Head of caudate nucleus (tissue), 42 donors: ENCODE measurements at regions of chr16 and their contacts with region 1.

Region 1: DNA sequence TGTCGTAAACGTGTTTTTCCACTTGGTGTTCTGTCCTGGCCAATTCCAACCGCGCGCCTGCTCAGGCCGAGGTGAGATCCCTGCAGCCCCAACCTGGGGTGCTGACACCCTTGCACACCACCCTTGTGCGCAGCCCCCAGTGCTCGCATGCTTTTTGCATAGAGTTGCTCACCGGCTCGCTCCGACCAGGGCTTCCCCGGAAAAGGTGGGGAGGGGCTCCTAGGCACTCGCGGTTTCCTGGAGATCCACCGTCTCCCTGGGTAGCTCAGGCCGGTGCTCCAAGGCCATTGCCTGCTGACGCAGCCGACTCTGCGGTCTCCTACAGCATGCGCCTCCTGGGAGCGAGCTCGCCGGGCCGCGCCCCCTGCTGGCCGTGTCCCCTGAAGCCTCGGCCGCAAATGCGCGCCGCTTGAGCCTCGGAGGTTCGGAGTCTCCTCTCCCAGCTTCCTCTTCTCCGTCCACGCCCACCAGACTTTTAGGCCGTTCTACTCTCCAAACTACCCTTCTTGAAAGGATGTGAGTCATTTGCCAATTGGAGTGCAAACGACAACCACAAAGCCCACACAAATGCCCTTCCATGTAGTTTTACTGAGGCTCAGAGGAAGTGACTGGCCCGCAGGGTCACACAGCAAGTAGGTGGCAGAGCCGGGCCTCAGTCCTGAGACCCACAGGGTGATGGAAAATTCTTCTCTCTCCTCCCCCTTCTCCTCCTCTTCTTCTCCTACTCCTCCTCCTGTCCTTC is 7.2 kb upstream of the PDP2 start:
- DNase-seq: peak; percentile 71 to 96 (median 90)

Region 2: GRCh38 chr16:66406534-66407221 is 466.4 kb before region 1 on chr16:
- intact Hi-C with region 1: loop called (anchors 5 kb)
- DNase-seq: peak; percentile 78 to 97 (median 90)

Region 3: DNA sequence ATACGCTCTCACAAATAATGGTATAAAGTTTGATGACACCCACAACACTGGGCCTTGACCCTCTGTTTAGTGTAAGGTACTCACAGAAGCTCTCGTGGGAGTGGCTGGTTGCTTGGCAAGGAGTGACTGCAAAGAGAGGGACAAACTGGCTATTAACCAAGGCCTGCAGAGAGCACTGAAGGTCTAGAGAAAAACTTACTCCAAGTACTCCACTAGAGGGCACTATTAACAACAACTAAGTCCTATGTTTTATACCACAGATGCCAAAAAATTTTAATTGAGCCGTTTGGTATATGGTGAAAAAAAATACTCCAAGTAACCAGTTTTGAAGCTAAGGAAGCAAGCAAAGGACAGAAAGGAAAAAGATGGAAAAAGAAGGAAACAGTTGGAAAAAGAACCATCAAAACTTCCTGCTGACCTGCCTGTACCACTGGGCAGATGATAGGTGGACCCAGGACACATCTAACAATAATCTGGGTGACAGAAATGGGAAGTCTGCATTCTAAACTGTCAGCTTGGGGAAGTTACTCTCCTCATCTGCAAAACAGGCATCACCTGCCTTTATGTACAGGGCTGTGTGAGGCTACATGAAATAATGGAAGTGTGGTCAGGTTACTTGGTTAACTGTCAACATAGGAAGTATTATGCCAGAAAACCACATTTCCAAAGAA is 144.9 kb before region 1 on chr16:
- intact Hi-C with region 1: loop called (anchors 10 kb)
- DNase-seq: peak in 15 of 42 donors; percentile 22 to 68 (median 40)

Region 4: GRCh38 chr16:66798161-66798560 is 75.0 kb before region 1 on chr16:
- intact Hi-C with region 1: no loop called
- DNase-seq: no peak

Region 5: GRCh38 chr16:66809765-66810164 is 63.3 kb before region 1 on chr16:
- intact Hi-C with region 1: no loop called
- DNase-seq: no peak